Psoas muscle (tissue), 8 donors: ENCODE measurements at regions of chr4 and their contacts with region 1.

Region 1: DNA sequence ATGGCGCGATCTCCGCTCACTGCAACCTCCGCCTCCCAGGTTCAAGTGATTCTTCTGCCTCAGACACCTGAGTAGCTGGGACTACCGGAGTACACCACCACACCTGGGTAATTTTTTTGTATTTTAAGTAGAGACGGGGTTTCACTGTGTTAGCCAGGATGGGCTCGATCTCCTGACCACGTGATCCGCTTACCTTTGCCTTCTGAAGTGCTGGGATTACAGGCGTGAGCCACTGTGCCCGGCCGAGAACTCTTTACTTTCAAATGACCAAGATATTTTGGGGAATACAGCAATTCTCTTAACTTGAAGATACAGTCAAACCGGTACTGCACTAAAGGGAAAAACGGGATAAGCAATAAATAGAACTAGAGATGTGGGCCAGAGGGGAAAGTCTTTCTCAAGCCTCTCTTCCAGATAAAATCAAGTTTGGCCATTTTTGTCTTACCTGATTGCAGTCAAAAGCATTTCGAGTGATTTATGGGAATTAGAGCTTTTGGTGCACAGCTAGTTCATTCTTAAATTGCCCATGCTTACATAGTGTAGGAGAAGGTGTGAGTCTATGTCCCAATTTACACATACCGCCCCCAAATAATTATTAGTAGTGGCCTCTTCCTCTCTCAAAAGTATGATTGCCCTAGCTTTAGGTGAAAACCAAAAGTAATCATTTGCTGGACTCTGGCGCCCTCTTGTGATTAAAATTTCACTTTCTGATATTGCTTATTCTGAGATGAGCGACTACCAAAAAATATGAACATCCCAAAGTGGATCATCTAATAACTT is 53.2 kb upstream of the ABCG2 start:
- DNase-seq: no peak
- ATAC-seq: peak; percentile 44 to 78 (median 54)
- H3K4me3 ChIP-seq: no peak overlapping the region
- H3K27ac ChIP-seq: no peak overlapping the region
- H3K4me1 ChIP-seq: no peaks in the 10 kb centered on the region
- H3K27me3 ChIP-seq: no peaks in the 10 kb centered on the region
- CTCF ChIP-seq: peak; percentile 82

Region 2: DNA sequence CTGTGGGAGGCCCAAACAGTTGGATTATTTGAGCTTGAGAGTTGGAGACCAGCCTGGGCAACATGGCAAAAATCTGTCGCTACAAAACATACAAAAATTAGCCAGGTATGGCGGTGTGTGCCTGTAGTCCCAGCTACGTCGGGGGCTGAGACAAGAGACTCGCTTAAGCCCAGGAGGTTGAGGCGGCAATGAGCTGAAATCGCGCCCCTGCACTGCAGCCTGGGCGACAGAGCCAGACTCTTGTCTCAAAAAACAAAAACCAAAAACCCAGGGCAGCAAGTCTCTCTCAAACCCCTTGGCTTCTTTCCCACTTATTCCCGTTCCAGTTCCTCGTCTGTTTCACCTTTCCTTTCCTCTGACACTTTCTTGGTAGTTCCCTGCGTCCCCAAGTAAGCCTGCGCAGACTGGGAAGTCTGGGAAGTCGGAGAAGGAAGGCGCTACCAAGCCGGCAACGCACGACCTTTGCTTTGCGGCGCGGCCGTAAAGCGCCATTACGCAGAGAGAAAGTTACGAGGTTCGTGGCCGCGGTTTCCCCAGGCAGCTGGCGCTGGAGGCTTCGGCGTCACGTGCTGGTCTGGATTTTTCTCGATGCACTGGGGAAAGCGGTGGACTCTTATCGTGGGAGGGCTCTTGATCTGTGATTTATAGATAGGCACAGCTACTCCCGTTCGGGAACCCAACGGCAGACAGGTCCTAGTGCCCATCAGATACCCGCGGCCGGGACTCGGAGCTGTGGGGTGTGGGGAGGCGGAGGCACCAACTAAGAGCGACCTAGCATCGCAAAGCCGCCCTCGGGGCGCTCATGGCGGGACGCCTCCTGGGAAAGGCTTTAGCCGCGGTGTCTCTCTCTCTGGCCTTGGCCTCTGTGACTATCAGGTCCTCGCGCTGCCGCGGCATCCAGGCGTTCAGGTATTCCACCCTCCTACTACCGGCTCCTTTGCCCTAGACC is 789.3 kb before region 1 on chr4 and contains the start of gene NUDT9:
- intact Hi-C with region 1: no loop called
- DNase-seq: peak; percentile 98
- ATAC-seq: peak; percentile 96 to 97 (median 96)
- H3K4me3 ChIP-seq: peak within 1 kb of the TSS; percentile 86
- H3K27ac ChIP-seq: peak within 1 kb of the TSS; percentile 94
- H3K4me1 ChIP-seq: peaks cover 5% of the 10 kb centered on the region
- H3K27me3 ChIP-seq: no peaks in the 10 kb centered on the region
- CTCF ChIP-seq: no peak
- total RNA-seq, gene NUDT9: 20.5 to 33.3 (median 24.0) TPM

Region 3: DNA sequence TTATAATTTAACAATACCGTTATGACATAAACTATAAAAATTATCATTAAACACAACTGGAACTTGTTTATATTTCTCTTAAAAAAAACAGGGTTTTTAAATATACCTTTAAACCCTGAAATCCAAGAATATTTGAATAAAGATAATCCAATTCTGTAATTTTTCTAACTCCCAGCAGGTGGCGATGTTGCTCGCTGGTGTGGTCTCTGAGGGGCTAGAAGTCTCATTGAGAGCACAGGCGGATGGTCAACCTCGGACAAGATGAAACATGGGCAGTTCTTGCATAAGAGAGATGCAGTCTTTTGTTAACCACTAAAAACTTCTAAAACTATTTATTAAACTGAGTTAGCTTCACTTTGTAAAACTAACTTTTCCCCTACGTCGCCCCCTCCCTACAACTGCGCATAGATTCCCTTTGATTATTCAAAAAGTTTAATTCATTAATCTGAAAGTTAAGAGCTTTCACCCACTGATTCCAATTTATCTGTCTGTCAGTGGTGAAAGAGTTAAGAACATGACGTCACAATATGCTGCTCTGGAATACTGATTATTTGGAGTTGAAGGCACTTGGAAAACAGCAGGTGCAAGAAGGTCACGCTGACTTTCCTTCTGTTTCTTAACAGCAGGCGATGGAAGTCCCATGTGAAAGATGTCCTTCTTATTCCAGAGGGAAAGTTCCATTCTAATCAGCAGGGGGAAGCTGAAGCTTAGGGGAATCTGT is 532.1 kb before region 1 on chr4:
- intact Hi-C with region 1: loop called (anchors 5 kb)
- DNase-seq: peak; percentile 53 to 75
- ATAC-seq: peak; percentile 32 to 88 (median 61)
- H3K4me3 ChIP-seq: no peak overlapping the region
- H3K27ac ChIP-seq: no peak overlapping the region
- H3K4me1 ChIP-seq: no peaks in the 10 kb centered on the region
- H3K27me3 ChIP-seq: no peaks in the 10 kb centered on the region
- CTCF ChIP-seq: peak; percentile 74

Region 4: DNA sequence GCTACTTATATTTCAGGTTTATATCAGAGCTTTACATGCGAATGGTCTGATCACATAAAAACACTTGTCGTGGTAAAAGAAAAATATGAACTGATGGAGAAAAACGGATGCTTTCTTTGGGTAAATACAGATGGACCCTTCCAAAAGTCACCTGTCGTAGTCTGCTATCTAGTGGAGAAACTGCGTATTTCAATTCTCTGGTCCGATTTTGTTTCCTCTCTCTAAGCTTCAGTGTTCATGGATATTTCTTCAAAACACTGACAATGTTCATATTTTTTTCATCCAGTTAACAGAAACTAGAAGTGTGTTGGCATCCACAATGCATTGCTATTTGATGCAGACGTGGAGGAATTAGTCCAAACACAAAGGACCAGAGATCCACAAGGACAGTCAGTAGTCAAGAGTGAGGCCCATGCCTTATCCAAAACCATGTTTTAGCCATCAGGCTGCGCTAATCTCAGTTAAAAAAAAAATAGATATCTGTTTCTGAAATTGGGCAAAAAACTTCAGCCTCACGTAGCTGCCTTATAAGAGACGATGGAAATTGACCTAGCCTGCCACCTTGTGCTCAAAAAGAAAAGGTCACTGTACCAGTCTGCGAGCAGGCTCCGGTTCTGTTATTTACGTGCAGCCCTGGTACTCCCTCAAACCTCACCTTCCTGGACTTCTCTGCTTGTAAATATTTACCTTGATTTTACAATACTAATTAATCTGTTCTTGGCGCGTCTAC is 362.9 kb before region 1 on chr4:
- intact Hi-C with region 1: loop called (anchors 2 to 5 kb)
- DNase-seq: no peak
- ATAC-seq: peak; percentile 60 to 85 (median 72)
- H3K4me3 ChIP-seq: peak overlapping the region; percentile 26
- H3K27ac ChIP-seq: no peak overlapping the region
- H3K4me1 ChIP-seq: no peaks in the 10 kb centered on the region
- H3K27me3 ChIP-seq: no peaks in the 10 kb centered on the region
- CTCF ChIP-seq: peak; percentile 57

Region 5: DNA sequence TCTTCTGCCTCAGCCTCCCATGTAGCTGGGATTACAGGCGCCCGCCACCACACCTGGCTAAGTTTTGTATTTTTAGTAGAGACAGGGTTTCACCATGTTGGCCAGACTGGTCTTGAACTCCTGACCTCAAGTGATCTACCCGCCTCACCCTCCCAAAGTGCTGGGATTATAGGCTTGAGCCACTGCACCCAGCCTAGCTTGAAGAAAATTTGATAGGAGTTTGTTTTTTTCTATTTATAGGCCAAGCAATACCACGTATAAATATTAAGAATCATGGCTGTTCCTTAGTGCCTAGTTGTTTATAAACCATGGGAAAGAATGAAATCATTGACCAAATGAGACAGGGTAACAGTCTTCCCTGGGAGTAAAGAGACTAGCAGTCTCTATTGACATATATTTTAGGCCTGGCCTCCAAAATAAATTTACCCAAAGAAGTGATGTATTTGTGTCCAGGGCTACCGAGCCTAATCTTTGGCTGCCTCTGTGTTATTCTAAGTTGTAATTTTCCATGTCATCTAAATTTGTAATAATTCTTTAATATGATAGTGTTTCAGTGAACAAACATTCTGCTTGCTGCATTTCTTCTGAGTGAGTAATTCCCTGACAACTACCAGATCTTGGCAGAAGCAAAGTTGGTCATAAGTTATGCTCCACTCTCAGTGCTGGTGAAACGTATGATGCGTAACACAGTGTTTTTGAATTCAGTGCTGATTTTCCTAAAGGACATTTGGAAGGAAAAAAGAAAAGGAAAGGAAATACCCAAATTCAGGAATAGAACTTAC is 194.0 kb before region 1 on chr4:
- intact Hi-C with region 1: no loop called
- DNase-seq: no peak
- ATAC-seq: peak; percentile 84 to 95 (median 92)
- H3K4me3 ChIP-seq: no peak overlapping the region
- H3K27ac ChIP-seq: peak overlapping the region; percentile 62
- H3K4me1 ChIP-seq: peaks cover 17% of the 10 kb centered on the region
- H3K27me3 ChIP-seq: no peaks in the 10 kb centered on the region
- CTCF ChIP-seq: no peak

Region 6: DNA sequence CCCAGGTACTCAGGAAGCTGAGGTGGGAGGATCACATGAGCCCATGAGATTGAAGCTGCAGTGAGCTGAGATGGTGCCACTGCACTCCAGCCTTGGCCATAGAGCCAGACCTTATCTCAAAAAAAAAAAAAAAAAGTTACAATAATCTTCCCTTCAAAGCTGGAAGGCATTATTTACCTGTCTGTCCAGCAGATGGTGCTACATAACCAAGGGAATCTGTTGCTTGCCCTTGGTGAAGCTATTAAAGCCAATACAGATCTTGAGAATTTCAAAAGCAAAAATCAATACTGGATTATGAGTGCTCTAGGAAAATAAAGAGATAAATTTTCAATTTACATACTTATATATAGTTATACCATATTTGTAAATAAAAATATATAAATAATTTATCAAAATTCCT is 178.4 kb before region 1 on chr4:
- intact Hi-C with region 1: loop called (anchors 1 to 2 kb)
- DNase-seq: no peak
- ATAC-seq: peak; percentile 43 to 69 (median 54)
- H3K4me3 ChIP-seq: no peak overlapping the region
- H3K27ac ChIP-seq: no peak overlapping the region
- H3K4me1 ChIP-seq: peaks cover 2% of the 10 kb centered on the region
- H3K27me3 ChIP-seq: no peaks in the 10 kb centered on the region
- CTCF ChIP-seq: peak; percentile 70

Region 7: DNA sequence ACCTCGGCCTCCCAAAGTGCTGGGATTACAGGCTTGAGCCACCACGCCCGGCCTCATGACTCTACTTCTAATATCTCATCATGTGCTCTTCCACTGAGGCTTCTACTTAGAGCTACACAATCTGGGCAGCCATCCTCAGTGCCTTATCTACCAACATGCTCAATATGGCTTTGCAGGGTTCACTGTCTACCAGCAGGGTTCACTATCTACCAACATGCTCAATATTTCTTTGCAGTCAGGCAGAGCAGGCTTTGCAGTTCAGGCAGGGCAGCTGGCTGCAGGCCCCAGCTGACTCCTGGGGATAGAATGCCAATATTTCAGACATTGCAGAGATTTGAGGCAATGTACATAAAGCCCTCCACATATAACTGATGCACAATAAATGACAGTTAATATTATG is 156.8 kb before region 1 on chr4:
- intact Hi-C with region 1: loop called in 1 of 2 experiments (anchors 5 kb)
- DNase-seq: no peak
- ATAC-seq: peak in 3 of 4 donors; percentile 48 to 78 (median 62)
- H3K4me3 ChIP-seq: no peak overlapping the region
- H3K27ac ChIP-seq: no peak overlapping the region
- H3K4me1 ChIP-seq: no peaks in the 10 kb centered on the region
- H3K27me3 ChIP-seq: no peaks in the 10 kb centered on the region
- CTCF ChIP-seq: peak; percentile 44

Region 8: GRCh38 chr4:88378691-88379559 is 167.3 kb after region 1 on chr4 and contains the start of gene HERC6:
- intact Hi-C with region 1: loop called in 1 of 2 experiments (anchors 5 kb)
- DNase-seq: peak; percentile 73 to 81
- ATAC-seq: peak; percentile 95 to 98 (median 97)
- H3K4me3 ChIP-seq: peak within 1 kb of the TSS; percentile 99
- H3K27ac ChIP-seq: peak within 1 kb of the TSS; percentile 76
- H3K4me1 ChIP-seq: no peaks in the 10 kb centered on the region
- H3K27me3 ChIP-seq: no peaks in the 10 kb centered on the region
- CTCF ChIP-seq: peak; percentile 61
- total RNA-seq, gene HERC6: 0.86 to 2.7 (median 1.8) TPM

Region 9: GRCh38 chr4:88456757-88457306 is 245.2 kb after region 1 on chr4 and contains the start of gene HERC5:
- intact Hi-C with region 1: loop called (anchors 5 kb)
- DNase-seq: peak; percentile 91 to 93
- ATAC-seq: peak; percentile 87 to 93 (median 92)
- H3K4me3 ChIP-seq: peak within 1 kb of the TSS; percentile 82
- H3K27ac ChIP-seq: peak within 1 kb of the TSS; percentile 60
- H3K4me1 ChIP-seq: no peaks in the 10 kb centered on the region
- H3K27me3 ChIP-seq: no peaks in the 10 kb centered on the region
- CTCF ChIP-seq: peak; percentile 62
- total RNA-seq, gene HERC5: 0.42 to 2.8 (median 1.3) TPM